Activated CD4-positive, alpha-beta T cell treated with anti-CD3 and anti-CD28 coated beads for 36 hours (primary cell): ENCODE measurements at regions of chr1 and their contacts with region 1.

Region 1: GRCh38 chr1:171485375-171486047 is at the start of gene PRRC2C:
- DNase-seq: peak; percentile 97
- ATAC-seq: peak; percentile 90
- H3K4me3 Mint-ChIP-seq: peak within 1 kb of the TSS; percentile 82
- H3K27ac Mint-ChIP-seq: peak within 1 kb of the TSS; percentile 95
- H3K4me1 Mint-ChIP-seq: peaks cover 43% of the 10 kb centered on the region
- H3K27me3 Mint-ChIP-seq: no peaks in the 10 kb centered on the region
- total RNA-seq, gene PRRC2C: 233 to 351 TPM

Region 2: GRCh38 chr1:170531758-170532657 is 953.5 kb before region 1 on chr1 and contains the start of gene GORAB:
- CTCF ChIA-PET with region 1: no interaction called
- POLR2A ChIA-PET with region 1: no interaction called
- intact Hi-C with region 1: loop called (anchors 5 kb)
- DNase-seq: peak; percentile 94
- ATAC-seq: peak; percentile 98
- H3K4me3 Mint-ChIP-seq: no peak within 1 kb of the TSS
- H3K27ac Mint-ChIP-seq: no peak within 1 kb of the TSS
- H3K4me1 Mint-ChIP-seq: peaks cover 15% of the 10 kb centered on the region
- H3K27me3 Mint-ChIP-seq: no peaks in the 10 kb centered on the region
- total RNA-seq, gene GORAB: 9.8 to 13.5 TPM

Region 3: DNA sequence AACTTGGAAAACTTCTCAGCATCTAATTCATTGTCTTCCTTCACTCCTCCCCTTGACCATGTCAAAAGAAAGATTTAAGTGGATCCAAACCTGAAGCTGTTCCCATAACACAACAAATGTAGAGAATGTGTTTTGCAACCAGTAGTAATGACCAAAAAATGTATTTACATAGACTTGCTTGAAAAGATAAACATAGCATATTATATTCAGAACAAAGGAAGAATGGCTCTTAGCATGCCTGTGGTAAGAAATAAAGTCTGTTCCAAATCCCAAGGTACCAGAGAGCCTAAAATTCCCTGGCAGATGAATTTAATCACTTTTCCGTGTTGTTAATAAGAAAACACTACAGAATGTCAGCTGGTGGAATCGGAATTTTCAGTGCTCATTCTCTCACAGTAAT is 358.0 kb before region 1 on chr1:
- CTCF ChIA-PET with region 1: no interaction called
- POLR2A ChIA-PET with region 1: no interaction called
- intact Hi-C with region 1: no loop called
- DNase-seq: no peak
- ATAC-seq: no peak
- H3K4me3 Mint-ChIP-seq: no peak overlapping the region
- H3K27ac Mint-ChIP-seq: no peak overlapping the region
- H3K4me1 Mint-ChIP-seq: no peaks in the 10 kb centered on the region
- H3K27me3 Mint-ChIP-seq: peaks cover 4% of the 10 kb centered on the region

Region 4: DNA sequence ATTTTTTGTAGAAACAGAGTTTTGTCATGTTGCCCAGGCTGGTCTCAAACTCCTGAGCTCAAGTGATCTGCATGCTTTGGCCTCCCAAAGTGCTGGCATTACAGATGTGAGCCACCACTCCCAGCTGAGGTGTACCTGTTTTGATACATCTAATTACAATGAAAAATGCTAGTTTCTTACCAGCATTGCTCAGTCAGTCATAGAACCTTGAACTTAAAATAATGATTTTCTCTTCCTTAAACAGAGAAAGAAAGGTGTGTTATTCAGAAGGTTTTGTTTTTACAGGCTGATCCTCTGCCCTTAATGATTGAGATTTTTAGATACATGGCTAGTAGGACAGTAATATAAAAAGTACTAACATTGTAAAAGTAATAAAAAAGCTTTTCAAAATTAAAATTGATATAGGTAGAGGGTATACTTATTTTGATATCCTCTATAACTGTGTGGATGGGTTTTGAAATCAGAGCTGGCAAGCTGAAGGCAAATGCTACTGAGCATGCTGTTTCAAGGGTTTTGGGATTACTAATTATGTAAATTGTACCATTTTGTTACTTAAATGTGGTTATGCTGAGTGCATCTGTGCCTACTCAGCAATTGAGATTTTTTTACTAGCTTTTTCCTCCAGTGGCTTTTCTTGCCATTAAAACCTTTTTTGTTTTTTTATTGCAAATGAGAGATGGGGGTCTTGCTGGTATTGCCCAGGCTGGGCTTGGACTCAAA is 16.0 kb after region 1 on chr1:
- CTCF ChIA-PET with region 1: interaction called, 15 read pairs
- POLR2A ChIA-PET with region 1: interaction called, 7 read pairs
- intact Hi-C with region 1: loop called (anchors 1 kb)
- DNase-seq: peak; percentile 24
- ATAC-seq: peak; percentile 80
- H3K4me3 Mint-ChIP-seq: peak overlapping the region; percentile 6
- H3K27ac Mint-ChIP-seq: peak overlapping the region; percentile 75
- H3K4me1 Mint-ChIP-seq: peaks cover 92% of the 10 kb centered on the region
- H3K27me3 Mint-ChIP-seq: no peaks in the 10 kb centered on the region

Region 5: GRCh38 chr1:171521567-171521966 is 36.1 kb after region 1 on chr1:
- CTCF ChIA-PET with region 1: interaction called, 9 read pairs
- POLR2A ChIA-PET with region 1: interaction called, 3 read pairs
- intact Hi-C with region 1: loop called in 1 of 2 experiments (anchors 5 kb)
- DNase-seq: no peak
- ATAC-seq: no peak
- H3K4me3 Mint-ChIP-seq: no peak overlapping the region
- H3K27ac Mint-ChIP-seq: no peak overlapping the region
- H3K4me1 Mint-ChIP-seq: no peaks in the 10 kb centered on the region
- H3K27me3 Mint-ChIP-seq: no peaks in the 10 kb centered on the region

Region 6: GRCh38 chr1:171781176-171781875 is 295.8 kb after region 1 on chr1 and contains the start of gene METTL13:
- CTCF ChIA-PET with region 1: no interaction called
- POLR2A ChIA-PET with region 1: no interaction called
- intact Hi-C with region 1: loop called (anchors 1 kb)
- DNase-seq: peak; percentile 99
- ATAC-seq: peak; percentile 97
- H3K4me3 Mint-ChIP-seq: peak within 1 kb of the TSS; percentile 92
- H3K27ac Mint-ChIP-seq: peak within 1 kb of the TSS; percentile 97
- H3K4me1 Mint-ChIP-seq: peaks cover 57% of the 10 kb centered on the region
- H3K27me3 Mint-ChIP-seq: no peaks in the 10 kb centered on the region
- total RNA-seq, gene METTL13: 41.1 to 52.9 TPM